GM18951 (cell line): ENCODE measurements at regions of chr13 and their contacts with region 1.

Region 1: DNA sequence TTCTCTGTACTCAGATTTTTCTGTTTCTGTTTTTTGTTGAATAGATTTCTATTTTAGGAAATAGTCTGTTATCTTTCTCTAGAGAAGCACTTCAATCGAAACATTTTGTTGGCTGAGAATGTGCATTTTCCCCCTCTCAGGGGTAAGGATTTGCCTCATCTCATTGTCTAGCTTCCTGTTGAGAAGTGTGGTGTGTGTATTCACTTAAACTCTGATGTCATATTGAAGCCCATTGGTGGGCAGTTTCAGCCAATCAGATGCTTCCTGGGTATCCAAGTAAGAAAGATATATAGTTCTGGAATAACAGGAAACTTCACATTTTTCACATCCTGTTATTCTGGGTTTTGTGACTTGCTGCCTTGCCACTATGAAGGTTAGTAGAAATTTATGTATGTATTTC is 87.6 kb downstream of the ARHGEF7 start:
- POLR2A ChIP-seq: no peak

Region 2: DNA sequence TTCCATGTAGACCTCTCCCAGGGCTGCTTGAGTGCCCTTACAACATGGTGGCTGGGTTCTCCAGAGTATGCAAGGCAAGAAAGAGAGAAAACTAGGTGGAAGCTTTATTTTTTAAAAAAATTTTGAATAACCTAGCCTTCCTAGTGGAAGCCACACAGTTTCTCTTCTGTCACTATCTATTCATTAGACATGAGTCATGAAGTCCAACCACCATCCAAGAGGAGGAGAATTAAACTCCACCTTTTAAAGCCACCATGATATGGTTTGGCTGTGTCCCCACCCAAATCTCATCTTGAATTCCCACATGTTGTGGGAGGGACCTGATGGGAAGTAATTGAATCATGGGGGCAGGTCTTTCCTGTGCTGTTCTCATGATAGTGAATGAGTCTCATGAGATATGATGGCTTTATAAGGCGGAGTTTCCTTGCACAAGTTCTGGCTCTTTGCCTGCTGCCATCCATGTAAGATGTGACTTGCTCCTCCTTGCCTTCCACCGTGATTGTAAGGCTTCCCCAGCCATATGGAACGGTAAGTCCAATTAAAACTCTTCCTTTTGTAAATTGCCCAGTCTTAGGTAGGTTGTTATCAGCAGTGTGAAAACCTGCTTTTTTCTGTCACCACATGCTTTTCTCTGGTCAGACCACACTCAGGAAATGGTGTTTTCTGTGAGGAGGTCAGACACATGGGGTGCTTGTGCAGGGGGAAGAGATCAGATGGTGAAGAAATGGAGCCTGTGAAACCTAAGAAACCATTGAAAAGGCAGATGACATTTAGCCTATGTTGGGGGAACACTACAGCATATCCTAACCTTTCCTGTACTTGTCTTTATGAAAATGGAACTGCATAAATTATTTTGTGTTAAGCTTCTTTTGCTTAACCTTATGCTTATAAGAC is 345.6 kb before region 1 on chr13:
- in situ Hi-C with region 1: no loop called
- POLR2A ChIP-seq: no peak

Region 3: GRCh38 chr13:110915057-110915873 is 287.5 kb before region 1 on chr13 and contains the start of gene ANKRD10:
- in situ Hi-C with region 1: loop called (anchors 25 kb)
- POLR2A ChIP-seq: peak; percentile 78